ENCODE measurements at regions of chr20 and their contacts with region 1.

Region 1: DNA sequence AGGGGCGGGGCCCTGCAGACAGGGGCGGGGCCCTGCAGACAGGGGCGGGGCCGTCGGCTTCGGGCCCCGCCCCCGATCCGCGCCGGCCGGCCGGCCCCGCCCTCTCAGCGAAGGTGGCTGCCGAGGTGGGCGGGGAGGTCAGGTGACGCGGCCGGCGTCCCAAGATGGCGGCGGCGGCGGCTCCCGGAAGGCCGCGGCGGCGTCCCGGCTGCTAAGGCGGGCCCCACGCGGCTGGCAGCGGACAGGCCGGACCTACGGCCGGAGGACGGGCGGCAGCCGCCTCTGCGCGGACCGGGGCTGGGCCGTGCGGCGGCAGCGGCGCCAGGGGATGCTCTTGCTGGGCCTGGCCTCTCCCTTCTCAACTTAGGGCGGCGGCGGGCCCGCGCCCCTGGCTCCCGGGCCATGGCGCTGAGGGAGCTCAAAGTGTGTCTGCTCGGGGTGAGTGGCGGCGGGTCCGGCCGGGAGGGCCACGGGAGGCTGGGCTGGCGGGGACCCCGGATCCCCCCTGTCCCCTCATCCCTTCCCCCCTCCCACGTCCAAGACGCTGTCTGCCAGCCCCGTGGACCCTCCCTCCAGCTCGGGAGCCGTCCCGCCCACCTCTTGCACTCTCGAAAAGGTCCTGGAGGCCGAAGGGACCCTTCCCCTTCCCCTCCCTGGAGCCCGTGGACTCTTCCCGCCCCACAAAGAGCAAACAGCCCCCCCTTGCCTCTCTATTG is at the start of gene RAB22A:
- DNase-seq: peak; percentile 76
- H3K4me3 Mint-ChIP-seq: peak within 1 kb of the TSS; percentile 92
- H3K27ac Mint-ChIP-seq: peak within 1 kb of the TSS; percentile 86
- H3K4me1 Mint-ChIP-seq: peaks cover 54% of the 10 kb centered on the region
- H3K27me3 Mint-ChIP-seq: no peaks in the 10 kb centered on the region
- total RNA-seq, gene RAB22A: 16.0 and 16.3 TPM in 2 replicates

Region 2: GRCh38 chr20:57788001-57788781 is 521.5 kb before region 1 on chr20:
- intact Hi-C with region 1: no loop called
- DNase-seq: no peak
- H3K4me3 Mint-ChIP-seq: no peak overlapping the region
- H3K27ac Mint-ChIP-seq: no peak overlapping the region
- H3K4me1 Mint-ChIP-seq: no peaks in the 10 kb centered on the region
- H3K27me3 Mint-ChIP-seq: no peaks in the 10 kb centered on the region

Region 3: DNA sequence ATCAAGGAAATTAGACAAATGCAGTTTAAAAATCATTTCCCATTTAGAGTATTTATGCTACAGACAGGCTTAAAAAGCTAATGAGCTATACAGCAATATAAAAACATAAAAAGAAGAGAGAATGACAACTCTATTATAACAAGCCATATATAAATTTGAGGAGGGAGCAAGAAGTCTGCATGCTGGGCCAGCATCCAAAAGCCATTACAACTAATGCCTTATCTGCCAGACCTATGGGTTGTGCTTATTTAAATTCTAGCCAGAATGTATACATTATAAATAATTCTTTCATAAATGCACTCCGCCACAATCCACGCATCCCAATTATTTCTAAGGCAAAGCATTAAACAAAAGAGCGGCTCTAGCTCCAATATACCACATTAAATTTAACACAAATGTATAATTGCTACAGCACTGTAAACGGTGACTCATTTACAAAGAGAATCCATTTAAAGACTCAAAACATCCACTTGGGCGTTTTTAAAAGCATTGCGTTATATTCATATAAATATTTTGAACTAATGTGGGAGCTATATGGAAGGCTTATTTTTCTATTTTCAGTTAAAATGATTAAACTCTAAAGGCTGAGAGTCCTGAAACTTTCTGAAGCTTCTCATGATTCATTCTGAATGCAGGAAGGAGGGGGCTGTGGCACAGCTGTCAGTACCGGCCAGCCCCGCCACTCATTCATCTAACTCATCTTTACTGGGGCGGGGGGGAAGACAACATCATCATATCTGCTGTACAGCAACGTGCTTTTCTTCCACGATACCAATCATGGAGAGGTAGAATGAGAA is 37.9 kb before region 1 on chr20:
- intact Hi-C with region 1: loop called (anchors 1 kb)
- DNase-seq: no peak
- H3K4me3 Mint-ChIP-seq: no peak overlapping the region
- H3K27ac Mint-ChIP-seq: peak overlapping the region; percentile 64
- H3K4me1 Mint-ChIP-seq: peaks cover 52% of the 10 kb centered on the region
- H3K27me3 Mint-ChIP-seq: no peaks in the 10 kb centered on the region

Region 4: GRCh38 chr20:58293453-58293852 is 16.3 kb before region 1 on chr20:
- intact Hi-C with region 1: no loop called
- DNase-seq: no peak
- H3K4me3 Mint-ChIP-seq: no peak overlapping the region
- H3K27ac Mint-ChIP-seq: no peak overlapping the region
- H3K4me1 Mint-ChIP-seq: peaks cover 12% of the 10 kb centered on the region
- H3K27me3 Mint-ChIP-seq: no peaks in the 10 kb centered on the region

Region 5: DNA sequence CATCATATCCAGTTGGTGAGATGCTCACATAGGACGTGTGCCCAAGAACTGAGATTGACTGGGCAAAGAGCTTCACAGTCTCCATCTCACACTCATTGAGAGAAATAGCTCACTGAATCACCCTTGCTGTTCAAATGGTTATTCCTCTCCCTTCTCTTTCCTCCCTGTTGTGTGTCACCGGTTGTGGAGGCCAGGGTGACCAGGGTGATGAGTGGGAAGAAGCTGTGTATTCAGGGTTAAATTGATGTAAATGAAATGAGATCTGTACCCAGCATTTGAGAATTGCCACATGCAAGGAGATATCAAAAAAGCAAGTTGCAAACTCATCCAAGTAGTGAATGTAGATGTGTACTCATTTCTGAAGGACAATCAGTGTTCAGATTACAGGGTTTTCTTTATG is 42.7 kb after region 1 on chr20:
- intact Hi-C with region 1: loop called (anchors 2 kb)
- DNase-seq: no peak
- H3K4me3 Mint-ChIP-seq: no peak overlapping the region
- H3K27ac Mint-ChIP-seq: peak overlapping the region; percentile 50
- H3K4me1 Mint-ChIP-seq: peaks cover 10% of the 10 kb centered on the region
- H3K27me3 Mint-ChIP-seq: no peaks in the 10 kb centered on the region

Region 6: GRCh38 chr20:58374906-58375791 is 65.4 kb after region 1 on chr20:
- intact Hi-C with region 1: no loop called
- DNase-seq: no peak
- H3K4me3 Mint-ChIP-seq: no peak overlapping the region
- H3K27ac Mint-ChIP-seq: no peak overlapping the region
- H3K4me1 Mint-ChIP-seq: peaks cover 2% of the 10 kb centered on the region
- H3K27me3 Mint-ChIP-seq: peaks cover 22% of the 10 kb centered on the region

Region 7: GRCh38 chr20:58388882-58389323 is 79.2 kb after region 1 on chr20 and contains the start of gene VAPB:
- intact Hi-C with region 1: loop called (anchors 1 kb)
- DNase-seq: peak; percentile 95
- H3K4me3 Mint-ChIP-seq: peak within 1 kb of the TSS; percentile 96
- H3K27ac Mint-ChIP-seq: peak within 1 kb of the TSS; percentile 97
- H3K4me1 Mint-ChIP-seq: peaks cover 35% of the 10 kb centered on the region
- H3K27me3 Mint-ChIP-seq: peaks cover 5% of the 10 kb centered on the region
- total RNA-seq, gene VAPB: 35.6 and 36.2 TPM in 2 replicates

Region 8: DNA sequence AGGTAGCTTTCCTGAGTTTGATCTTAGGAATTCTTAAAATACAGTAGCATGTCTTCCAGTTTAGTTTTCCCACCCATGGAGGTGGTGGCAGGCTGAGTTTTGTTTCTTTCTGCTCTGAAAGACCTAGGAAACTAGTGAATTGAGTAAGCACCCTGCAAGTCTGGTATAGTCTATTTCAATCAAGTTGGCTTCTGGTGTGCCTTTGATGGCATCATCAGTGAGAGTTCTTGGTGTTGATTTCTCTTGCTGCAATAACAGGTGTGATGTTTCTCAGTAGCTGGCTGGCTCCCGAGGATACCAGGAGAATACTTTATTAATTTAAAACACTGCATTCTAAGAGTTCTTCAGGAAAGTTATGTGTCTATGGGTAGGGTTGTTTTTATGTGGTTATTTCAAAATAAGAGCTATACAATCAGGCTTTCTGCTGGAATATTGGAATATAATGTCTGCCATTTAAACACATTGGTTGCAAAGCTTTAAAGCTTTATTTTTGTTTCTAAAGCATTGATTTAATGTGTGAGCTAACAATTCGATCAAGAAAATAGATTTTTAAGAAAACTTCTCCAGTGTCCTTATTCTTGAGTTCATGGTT is 98.3 kb after region 1 on chr20:
- intact Hi-C with region 1: loop called (anchors 5 kb)
- DNase-seq: no peak
- H3K4me3 Mint-ChIP-seq: no peak overlapping the region
- H3K27ac Mint-ChIP-seq: peak overlapping the region; percentile 64
- H3K4me1 Mint-ChIP-seq: peaks cover 32% of the 10 kb centered on the region
- H3K27me3 Mint-ChIP-seq: no peaks in the 10 kb centered on the region

Region 9: GRCh38 chr20:58447511-58448391 is 138.0 kb after region 1 on chr20:
- intact Hi-C with region 1: loop called (anchors 5 kb)
- DNase-seq: peak; percentile 27
- H3K4me3 Mint-ChIP-seq: no peak overlapping the region
- H3K27ac Mint-ChIP-seq: no peak overlapping the region
- H3K4me1 Mint-ChIP-seq: peaks cover 21% of the 10 kb centered on the region
- H3K27me3 Mint-ChIP-seq: no peaks in the 10 kb centered on the region

Region 10: GRCh38 chr20:58890518-58891085 is 580.9 kb after region 1 on chr20:
- intact Hi-C with region 1: loop called (anchors 5 kb)
- DNase-seq: peak; percentile 55
- H3K4me3 Mint-ChIP-seq: peak overlapping the region; percentile 85
- H3K27ac Mint-ChIP-seq: peak overlapping the region; percentile 94
- H3K4me1 Mint-ChIP-seq: peaks cover 31% of the 10 kb centered on the region
- H3K27me3 Mint-ChIP-seq: no peaks in the 10 kb centered on the region